IMR-90 (cell line): ENCODE measurements at regions of chr2 and their contacts with region 1.

Region 1: DNA sequence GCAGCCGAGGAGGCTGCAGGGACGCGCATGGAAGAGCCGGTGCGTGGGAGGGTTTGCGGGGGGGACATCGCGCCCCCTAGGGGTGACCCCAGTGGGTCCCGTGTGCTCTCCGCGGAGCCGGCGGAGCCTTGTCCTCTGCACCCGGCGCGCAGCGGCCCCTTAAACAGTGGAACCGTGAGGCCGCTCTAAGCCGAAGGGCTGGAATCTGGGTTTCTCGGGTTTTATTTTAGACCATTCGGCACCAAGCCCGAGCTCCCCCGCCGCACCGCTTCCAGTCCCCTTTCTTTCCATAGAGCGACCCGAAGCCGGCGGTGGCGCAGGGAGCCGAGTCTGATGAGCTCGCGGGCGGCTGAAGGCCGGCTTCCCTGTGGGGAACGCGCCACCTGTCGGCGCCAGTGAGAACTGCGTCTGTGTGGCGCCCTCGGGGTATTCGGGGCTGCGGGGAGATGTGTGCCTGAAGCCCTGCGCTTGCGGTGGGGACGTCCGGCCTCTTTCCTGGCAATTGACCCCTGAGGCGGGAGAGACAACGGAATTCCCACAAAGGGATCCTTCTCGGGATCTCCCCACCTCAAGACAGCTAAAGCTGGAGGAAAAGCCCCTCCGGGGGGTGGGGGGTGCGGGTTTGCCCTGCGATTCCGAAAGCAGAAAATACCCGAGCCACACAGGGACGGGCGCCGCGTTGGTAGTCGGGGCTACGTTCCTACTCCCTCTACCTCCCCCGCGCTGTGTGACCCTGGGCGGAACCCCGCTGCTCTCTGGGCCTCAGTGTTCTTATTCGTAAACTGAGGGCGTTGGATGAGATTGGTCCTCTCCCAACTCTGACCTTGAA is 8.2 kb upstream of the EN1 start:
- DNase-seq: peak; percentile 52
- ATAC-seq: peak; percentile 99
- H3K4me3 ChIP-seq: no peak overlapping the region
- H3K27ac ChIP-seq: no peak overlapping the region
- H3K4me1 ChIP-seq: no peaks in the 10 kb centered on the region
- H3K27me3 ChIP-seq: peaks cover 95% of the 10 kb centered on the region
- CTCF ChIP-seq: peak; percentile 94
- POLR2A ChIP-seq: no peak
- RAD21 ChIP-seq: peak; percentile 96

Region 2: DNA sequence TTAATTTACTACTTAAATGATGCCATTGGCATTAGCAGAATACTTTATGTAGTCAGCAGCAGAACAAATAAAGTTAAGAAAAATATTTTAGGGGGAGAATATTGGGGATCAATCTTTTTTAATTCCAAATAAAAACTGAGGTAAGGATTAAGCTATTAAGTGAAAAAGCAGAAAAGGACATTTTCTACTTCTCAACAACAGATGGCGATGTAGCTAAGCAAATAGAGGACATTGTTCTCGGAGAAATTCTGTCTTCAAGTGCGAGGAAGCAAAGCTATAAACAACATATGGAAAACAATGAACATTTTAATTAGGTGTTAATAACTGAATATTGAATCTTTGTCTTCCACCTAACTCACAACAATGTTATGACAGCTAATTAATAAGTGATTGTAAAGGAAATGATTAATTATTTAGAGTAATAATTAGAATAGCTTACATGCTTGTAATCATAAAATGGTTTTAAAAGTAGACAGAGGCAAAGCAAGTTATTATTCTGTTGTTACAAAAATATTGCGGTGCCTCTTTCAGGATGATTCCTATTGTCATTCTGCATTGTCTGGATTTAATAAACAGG is 808.9 kb before region 1 on chr2:
- CTCF ChIA-PET with region 1: interaction called, 9 read pairs
- POLR2A ChIA-PET with region 1: no interaction called
- dilution Hi-C with region 1: no loop called
- in situ Hi-C with region 1: loop called (anchors 25 kb)
- intact Hi-C with region 1: loop called (anchors 2 kb)
- DNase-seq: peak; percentile 53
- ATAC-seq: peak; percentile 81
- H3K4me3 ChIP-seq: no peak overlapping the region
- H3K27ac ChIP-seq: no peak overlapping the region
- H3K4me1 ChIP-seq: no peaks in the 10 kb centered on the region
- H3K27me3 ChIP-seq: peaks cover 21% of the 10 kb centered on the region
- CTCF ChIP-seq: peak; percentile 69
- POLR2A ChIP-seq: no peak
- RAD21 ChIP-seq: peak; percentile 69

Region 3: GRCh38 chr2:118221666-118222594 is 633.7 kb before region 1 on chr2:
- CTCF ChIA-PET with region 1: interaction called, 7 read pairs
- POLR2A ChIA-PET with region 1: no interaction called
- dilution Hi-C with region 1: no loop called
- in situ Hi-C with region 1: loop called (anchors 5 kb)
- intact Hi-C with region 1: loop called (anchors 1 kb)
- DNase-seq: peak; percentile 76
- ATAC-seq: peak; percentile 96
- H3K4me3 ChIP-seq: no peak overlapping the region
- H3K27ac ChIP-seq: no peak overlapping the region
- H3K4me1 ChIP-seq: no peaks in the 10 kb centered on the region
- H3K27me3 ChIP-seq: peaks cover 43% of the 10 kb centered on the region
- CTCF ChIP-seq: peak; percentile 82
- POLR2A ChIP-seq: no peak
- RAD21 ChIP-seq: peak; percentile 77

Region 4: GRCh38 chr2:118492335-118492734 is 363.3 kb before region 1 on chr2:
- CTCF ChIA-PET with region 1: interaction called, 6 read pairs
- POLR2A ChIA-PET with region 1: no interaction called
- dilution Hi-C with region 1: no loop called
- in situ Hi-C with region 1: no loop called
- intact Hi-C with region 1: loop called (anchors 1 kb)
- DNase-seq: peak; percentile 37
- ATAC-seq: no peak
- H3K4me3 ChIP-seq: no peak overlapping the region
- H3K27ac ChIP-seq: no peak overlapping the region
- H3K4me1 ChIP-seq: no peaks in the 10 kb centered on the region
- H3K27me3 ChIP-seq: no peaks in the 10 kb centered on the region
- CTCF ChIP-seq: peak; percentile 49
- POLR2A ChIP-seq: no peak
- RAD21 ChIP-seq: peak; percentile 40

Region 5: DNA sequence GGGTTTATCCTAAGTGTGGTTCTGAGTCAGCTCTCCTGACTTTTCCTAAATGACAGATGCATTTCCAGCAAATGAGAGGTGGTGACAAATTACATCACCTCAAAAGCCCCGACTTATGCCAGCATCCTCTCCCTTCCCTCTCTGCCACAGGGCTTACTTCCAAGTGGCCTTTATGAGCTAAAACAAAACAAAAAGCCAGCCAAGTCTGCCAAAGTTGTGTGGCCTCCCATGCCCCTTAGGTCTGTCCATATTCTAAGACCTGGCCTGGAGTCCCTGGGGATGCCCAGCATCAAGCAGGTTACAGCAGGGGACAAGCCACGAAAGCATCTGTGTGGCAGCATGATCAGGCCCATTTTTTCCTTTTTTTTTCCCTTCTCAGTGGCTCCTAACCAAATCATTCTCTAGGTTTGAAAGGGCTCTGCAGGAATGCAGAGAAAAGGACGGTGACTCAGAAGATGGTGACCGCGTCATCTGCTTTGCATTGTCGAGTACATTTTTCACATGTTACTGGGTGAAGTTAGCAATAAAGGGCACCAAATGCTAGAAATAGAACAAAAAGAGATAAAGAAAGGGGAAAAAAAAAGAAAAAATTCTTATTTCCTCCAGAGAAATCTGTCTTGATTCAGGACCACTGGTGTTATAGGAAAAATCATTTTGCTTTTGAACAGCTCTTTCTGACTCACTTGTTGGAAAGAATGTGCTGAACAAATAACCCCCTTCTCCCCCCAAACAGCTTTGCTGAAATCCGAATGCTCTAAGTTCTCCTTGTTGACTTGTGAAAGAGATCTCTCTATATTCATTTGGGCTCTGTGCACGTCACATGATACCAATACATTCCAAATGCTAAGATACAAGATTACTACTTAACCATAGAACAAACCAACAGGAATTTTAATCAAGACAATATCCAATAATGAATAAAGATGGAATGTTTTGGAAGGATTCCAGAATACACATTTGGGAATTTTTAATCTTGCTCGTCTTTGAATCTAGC is 186.9 kb before region 1 on chr2:
- CTCF ChIA-PET with region 1: no interaction called
- POLR2A ChIA-PET with region 1: no interaction called
- dilution Hi-C with region 1: no loop called
- in situ Hi-C with region 1: no loop called
- intact Hi-C with region 1: loop called (anchors 5 kb)
- DNase-seq: peak; percentile 95
- ATAC-seq: peak; percentile 83
- H3K4me3 ChIP-seq: no peak overlapping the region
- H3K27ac ChIP-seq: peak overlapping the region; percentile 47
- H3K4me1 ChIP-seq: peaks cover 7% of the 10 kb centered on the region
- H3K27me3 ChIP-seq: no peaks in the 10 kb centered on the region
- CTCF ChIP-seq: no peak
- POLR2A ChIP-seq: no peak
- RAD21 ChIP-seq: no peak

Region 6: DNA sequence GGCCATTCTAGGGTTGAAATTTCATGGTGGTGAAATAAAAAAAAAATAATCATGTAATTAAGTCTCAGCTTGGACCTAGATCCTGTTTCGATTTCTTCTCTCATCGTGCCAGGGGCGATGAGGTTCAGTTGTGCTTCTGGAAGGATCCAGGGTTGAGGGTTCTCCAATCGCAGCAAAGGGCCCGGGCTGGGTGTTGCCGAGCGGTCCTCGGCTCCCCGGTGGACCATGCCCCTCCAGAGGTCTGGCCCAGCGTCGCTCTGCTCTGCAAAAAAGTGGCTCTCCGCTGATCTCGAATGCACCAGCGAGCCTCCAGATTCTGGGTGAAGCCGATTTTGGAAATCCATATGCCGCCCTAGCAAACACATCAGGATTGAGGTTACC is 47.2 kb before region 1 on chr2:
- CTCF ChIA-PET with region 1: no interaction called
- POLR2A ChIA-PET with region 1: no interaction called
- dilution Hi-C with region 1: no loop called
- in situ Hi-C with region 1: no loop called
- intact Hi-C with region 1: no loop called
- DNase-seq: no peak
- ATAC-seq: no peak
- H3K4me3 ChIP-seq: no peak overlapping the region
- H3K27ac ChIP-seq: no peak overlapping the region
- H3K4me1 ChIP-seq: no peaks in the 10 kb centered on the region
- H3K27me3 ChIP-seq: peaks cover 25% of the 10 kb centered on the region
- CTCF ChIP-seq: no peak
- POLR2A ChIP-seq: no peak
- RAD21 ChIP-seq: no peak

Region 7: GRCh38 chr2:119011162-119011909 is 155.7 kb after region 1 on chr2:
- CTCF ChIA-PET with region 1: no interaction called
- POLR2A ChIA-PET with region 1: no interaction called
- dilution Hi-C with region 1: no loop called
- in situ Hi-C with region 1: no loop called
- intact Hi-C with region 1: no loop called
- DNase-seq: peak; percentile 5
- ATAC-seq: peak; percentile 99
- H3K4me3 ChIP-seq: no peak overlapping the region
- H3K27ac ChIP-seq: no peak overlapping the region
- H3K4me1 ChIP-seq: no peaks in the 10 kb centered on the region
- H3K27me3 ChIP-seq: peaks cover 5% of the 10 kb centered on the region
- CTCF ChIP-seq: peak; percentile 67
- POLR2A ChIP-seq: no peak
- RAD21 ChIP-seq: peak; percentile 82